A673 (cell line): ENCODE measurements at regions of chr2 and their contacts with region 1.

Region 1: GRCh38 chr2:134225173-134225572 is 28.7 kb upstream of the MGAT5 start:
- DNase-seq: no peak
- H3K4me3 ChIP-seq: no peak overlapping the region
- H3K27ac ChIP-seq: no peak overlapping the region
- H3K4me1 ChIP-seq: no peaks in the 10 kb centered on the region
- H3K27me3 ChIP-seq: peaks cover 6% of the 10 kb centered on the region
- CTCF ChIP-seq: no peak

Region 2: GRCh38 chr2:133674433-133675331 is 550.5 kb before region 1 on chr2:
- CTCF ChIA-PET with region 1: no interaction called
- POLR2A ChIA-PET with region 1: no interaction called
- intact Hi-C with region 1: no loop called
- DNase-seq: peak; percentile 94
- H3K4me3 ChIP-seq: peak overlapping the region; percentile 40
- H3K27ac ChIP-seq: peak overlapping the region; percentile 90
- H3K4me1 ChIP-seq: peaks cover 42% of the 10 kb centered on the region
- H3K27me3 ChIP-seq: no peaks in the 10 kb centered on the region
- CTCF ChIP-seq: no peak

Region 3: GRCh38 chr2:133918141-133918540 is 307.0 kb before region 1 on chr2:
- CTCF ChIA-PET with region 1: no interaction called
- POLR2A ChIA-PET with region 1: no interaction called
- intact Hi-C with region 1: no loop called
- DNase-seq: no peak
- H3K4me3 ChIP-seq: no peak overlapping the region
- H3K27ac ChIP-seq: no peak overlapping the region
- H3K4me1 ChIP-seq: no peaks in the 10 kb centered on the region
- H3K27me3 ChIP-seq: peaks cover 8% of the 10 kb centered on the region
- CTCF ChIP-seq: no peak

Region 4: DNA sequence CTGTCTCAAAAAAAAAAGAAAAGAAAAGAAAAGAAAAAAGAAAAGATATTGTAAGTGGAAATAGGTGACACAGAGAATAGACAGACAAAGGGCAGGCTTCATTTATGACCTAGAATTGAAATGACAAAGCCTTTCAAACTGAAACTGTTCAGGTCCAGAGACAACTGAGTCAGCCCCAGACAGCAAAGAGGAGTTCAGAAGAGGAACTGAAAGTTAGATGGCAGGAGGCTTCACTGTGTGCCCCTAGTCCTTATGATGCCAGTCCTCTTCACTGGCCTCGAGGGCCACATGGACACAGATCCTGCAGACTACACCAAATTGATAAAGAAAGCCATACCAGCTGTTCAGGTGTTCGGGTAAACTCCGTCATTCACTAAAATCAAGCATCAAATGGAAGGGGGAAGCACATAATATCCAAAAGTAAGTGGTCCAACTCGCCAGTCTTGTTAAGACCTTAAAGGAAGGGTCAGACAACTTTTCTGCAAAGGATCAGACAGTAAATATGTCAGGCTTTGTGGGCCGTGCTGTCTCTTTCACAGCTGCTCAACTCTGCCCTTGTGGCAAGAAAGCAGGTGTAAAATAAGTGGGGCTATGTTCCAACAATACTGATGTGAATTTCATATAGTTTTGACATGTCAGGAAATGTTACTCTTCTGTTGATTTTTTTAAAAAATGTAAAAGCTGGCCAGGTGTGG is 203.2 kb before region 1 on chr2:
- CTCF ChIA-PET with region 1: no interaction called
- POLR2A ChIA-PET with region 1: interaction called, 23 read pairs
- intact Hi-C with region 1: no loop called
- DNase-seq: no peak
- H3K4me3 ChIP-seq: no peak overlapping the region
- H3K27ac ChIP-seq: no peak overlapping the region
- H3K4me1 ChIP-seq: no peaks in the 10 kb centered on the region
- H3K27me3 ChIP-seq: peaks cover 4% of the 10 kb centered on the region
- CTCF ChIP-seq: no peak

Region 5: DNA sequence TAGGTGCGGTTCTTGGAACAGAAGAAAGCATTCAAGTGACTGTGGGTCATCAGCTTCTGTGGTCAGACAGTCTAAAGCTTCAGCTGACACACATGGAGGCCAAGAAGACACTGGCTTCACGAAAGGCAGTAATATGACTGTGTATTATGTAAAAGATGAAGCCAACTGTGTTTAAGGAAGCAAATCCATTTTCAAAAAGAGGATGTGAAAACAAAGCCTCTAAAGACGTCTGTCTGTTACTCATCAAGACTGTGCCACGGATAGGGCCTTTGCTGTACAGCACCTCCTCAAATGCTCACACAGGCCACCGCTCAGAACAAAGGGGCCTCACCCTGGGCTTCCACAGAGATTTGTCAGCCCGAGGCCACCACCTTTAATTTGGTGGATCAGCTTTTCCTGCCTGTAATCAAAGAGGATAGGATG is 514.7 kb after region 1 on chr2:
- CTCF ChIA-PET with region 1: no interaction called
- POLR2A ChIA-PET with region 1: no interaction called
- intact Hi-C with region 1: no loop called
- DNase-seq: no peak
- H3K4me3 ChIP-seq: no peak overlapping the region
- H3K27ac ChIP-seq: no peak overlapping the region
- H3K4me1 ChIP-seq: no peaks in the 10 kb centered on the region
- H3K27me3 ChIP-seq: peaks cover 19% of the 10 kb centered on the region
- CTCF ChIP-seq: no peak